PC-3 (cell line): ENCODE measurements at regions of chr11 and their contacts with region 1.

Region 1: DNA sequence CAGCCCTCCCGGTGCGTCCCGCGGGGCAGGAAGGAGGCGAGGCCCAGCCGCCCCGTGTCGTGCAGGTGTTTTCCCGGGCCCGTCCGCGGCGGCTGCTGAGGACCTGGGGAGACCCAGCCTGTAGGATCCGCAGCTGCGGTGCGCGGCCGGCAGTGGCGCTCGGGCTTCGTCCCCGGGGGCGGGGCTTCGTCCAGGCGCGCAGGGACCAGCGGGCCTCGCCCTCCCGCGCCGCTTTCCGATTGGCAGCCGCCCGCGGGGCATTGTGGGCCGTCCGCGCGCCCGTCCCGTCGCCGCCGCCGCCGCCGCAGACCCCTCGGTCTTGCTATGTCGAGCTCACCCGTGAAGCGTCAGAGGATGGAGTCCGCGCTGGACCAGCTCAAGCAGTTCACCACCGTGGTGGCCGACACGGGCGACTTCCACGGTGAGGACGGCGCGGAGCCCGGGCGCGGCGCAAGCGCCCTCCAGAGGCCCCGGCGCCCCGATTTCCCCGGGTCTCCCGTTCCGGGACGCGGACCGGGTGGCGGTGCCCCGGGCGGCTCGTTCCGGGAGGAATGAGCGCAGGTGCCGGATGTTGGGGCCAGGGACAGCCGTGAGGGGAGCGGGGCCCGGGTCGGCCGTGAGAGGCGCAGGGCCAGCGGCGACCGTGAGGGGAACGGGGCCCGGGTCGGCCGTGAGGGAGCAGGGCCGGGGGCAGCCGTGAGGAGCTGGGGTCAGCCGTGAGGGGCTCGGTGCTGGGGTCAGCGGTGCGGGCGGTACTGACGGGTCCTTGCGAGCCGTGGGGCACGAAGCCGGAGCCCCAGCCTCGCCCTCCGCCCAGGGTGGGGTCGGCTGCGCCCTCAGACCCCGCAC is at the start of gene TALDO1:
- DNase-seq: peak; percentile 86
- ATAC-seq: peak; percentile 90
- H3K4me3 ChIP-seq: peak within 1 kb of the TSS; percentile 97
- H3K27ac ChIP-seq: peak within 1 kb of the TSS; percentile 75
- H3K4me1 ChIP-seq: peaks cover 15% of the 10 kb centered on the region
- H3K27me3 ChIP-seq: no peaks in the 10 kb centered on the region
- CTCF ChIP-seq: peak; percentile 26; the same call in 1 of the 2 replicates
- total RNA-seq, gene TALDO1: 287 and 326 TPM in 2 replicates

Region 2: GRCh38 chr11:406978-407739 is 340.2 kb before region 1 on chr11:
- CTCF ChIA-PET with region 1: no interaction called
- POLR2A ChIA-PET with region 1: no interaction called
- intact Hi-C with region 1: no loop called
- DNase-seq: peak; percentile 68
- ATAC-seq: peak; percentile 65
- H3K4me3 ChIP-seq: peak overlapping the region; percentile 43; the same call in 1 of the 2 replicates
- H3K27ac ChIP-seq: no peak overlapping the region
- H3K4me1 ChIP-seq: peaks cover 7% of the 10 kb centered on the region; the same call in 1 of the 2 replicates
- H3K27me3 ChIP-seq: no peaks in the 10 kb centered on the region
- CTCF ChIP-seq: no peak

Region 3: DNA sequence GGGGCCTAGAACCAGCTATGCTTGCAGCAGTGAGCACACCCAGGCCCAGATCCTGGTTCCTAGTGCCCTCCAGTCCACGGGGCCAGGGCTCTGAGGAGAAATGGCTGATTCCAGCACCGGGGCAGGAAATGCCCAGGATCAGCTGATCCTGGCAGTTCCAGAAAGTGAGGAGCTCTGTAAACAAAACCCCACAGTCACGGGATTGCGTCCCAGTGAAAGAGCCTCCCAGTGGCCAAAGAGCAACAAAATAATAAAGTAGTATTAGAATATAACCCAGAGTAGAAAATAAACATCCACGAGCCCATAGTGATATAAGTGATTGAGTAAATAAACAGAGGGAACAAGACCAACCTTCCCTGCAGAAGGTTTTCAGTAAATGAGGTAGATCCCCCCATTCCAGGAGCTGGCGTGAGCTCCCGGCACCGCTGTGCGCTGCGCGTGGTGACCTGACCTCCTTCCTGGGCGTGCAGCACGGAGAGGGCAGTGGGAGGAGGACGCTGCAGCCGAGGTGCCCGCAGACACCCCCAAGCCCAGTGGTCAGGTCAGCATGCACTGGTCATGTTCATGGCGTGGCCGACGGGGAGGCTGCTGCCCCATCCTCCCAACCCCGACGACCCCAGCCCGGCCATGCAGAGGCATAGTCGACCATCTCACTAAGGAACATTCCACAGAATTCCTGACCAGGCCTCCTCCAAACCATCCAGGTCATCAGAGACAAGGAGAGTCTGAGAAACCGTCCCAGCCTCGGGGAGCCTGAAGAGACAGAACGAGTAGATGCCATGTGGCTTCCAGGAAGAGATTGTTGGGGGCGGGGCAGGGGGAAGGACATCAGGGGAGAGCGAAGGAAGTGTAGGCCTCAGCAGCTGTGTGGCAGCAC is 277.5 kb before region 1 on chr11:
- CTCF ChIA-PET with region 1: no interaction called
- POLR2A ChIA-PET with region 1: no interaction called
- intact Hi-C with region 1: no loop called
- DNase-seq: peak; percentile 34
- ATAC-seq: peak; percentile 97
- H3K4me3 ChIP-seq: 0 out of 2 replicates have a peak overlapping the region, but pooled peaks have one; percentile 31
- H3K27ac ChIP-seq: no peak overlapping the region
- H3K4me1 ChIP-seq: peaks cover 7% of the 10 kb centered on the region; the same call in 1 of the 2 replicates
- H3K27me3 ChIP-seq: no peaks in the 10 kb centered on the region
- CTCF ChIP-seq: 0 out of 2 replicates have a peak, but pooled peaks have one; percentile 20

Region 4: GRCh38 chr11:762421-763072 is 15.2 kb after region 1 on chr11:
- CTCF ChIA-PET with region 1: no interaction called
- POLR2A ChIA-PET with region 1: no interaction called
- intact Hi-C with region 1: loop called (anchors 2 kb)
- DNase-seq: peak; percentile 81
- ATAC-seq: peak; percentile 87
- H3K4me3 ChIP-seq: no peak overlapping the region
- H3K27ac ChIP-seq: peak overlapping the region; percentile 91
- H3K4me1 ChIP-seq: peaks cover 14% of the 10 kb centered on the region
- H3K27me3 ChIP-seq: no peaks in the 10 kb centered on the region
- CTCF ChIP-seq: peak; percentile 54

Region 5: GRCh38 chr11:1131033-1131911 is 383.9 kb after region 1 on chr11:
- CTCF ChIA-PET with region 1: no interaction called
- POLR2A ChIA-PET with region 1: no interaction called
- intact Hi-C with region 1: no loop called
- DNase-seq: no peak
- ATAC-seq: no peak
- H3K4me3 ChIP-seq: no peak overlapping the region
- H3K27ac ChIP-seq: no peak overlapping the region
- H3K4me1 ChIP-seq: no peaks in the 10 kb centered on the region
- H3K27me3 ChIP-seq: no peaks in the 10 kb centered on the region
- CTCF ChIP-seq: no peak